Heart right ventricle (tissue), 16 donors: ENCODE measurements at regions of chr3 and their contacts with region 1.

Region 1: DNA sequence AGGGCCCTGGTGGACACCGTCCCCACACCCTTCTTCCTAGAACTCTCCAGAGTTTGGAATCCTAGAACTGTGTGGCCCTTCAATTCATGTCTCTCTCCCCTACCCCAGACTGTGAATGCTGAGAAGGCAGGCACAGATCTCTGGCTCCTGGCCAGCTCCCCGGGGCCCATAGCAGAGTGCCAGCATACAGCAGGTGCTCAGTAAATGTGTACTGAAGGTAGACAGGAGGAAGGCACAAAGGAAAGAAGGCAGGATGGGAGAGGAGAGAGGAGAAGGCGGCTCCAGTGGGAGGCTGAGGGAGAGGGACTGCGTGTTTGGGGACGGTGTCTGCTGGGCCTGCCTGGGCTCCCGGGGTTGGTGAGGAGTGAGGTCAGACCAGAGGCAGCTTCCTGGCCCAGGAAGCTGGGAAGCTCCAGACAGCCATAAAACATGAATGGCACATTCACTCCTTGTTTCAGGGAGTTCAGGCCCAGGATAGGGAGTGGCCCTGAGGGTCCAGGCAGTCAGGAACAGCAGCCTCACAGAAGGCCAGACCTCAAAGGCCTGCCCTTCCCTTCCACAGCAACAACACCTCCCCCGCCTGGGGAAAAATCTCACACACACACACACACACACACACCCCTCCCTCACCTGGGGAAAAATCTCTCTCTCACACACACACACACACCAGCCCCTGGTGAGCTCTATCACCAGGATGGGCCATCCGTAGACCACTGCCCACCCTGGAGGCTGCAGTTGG is 137.1 kb upstream of the PRR20G start:
- DNase-seq: no peak
- ATAC-seq: no peak
- H3K4me3 ChIP-seq: no peak overlapping the region
- H3K27ac ChIP-seq: no peak overlapping the region
- H3K4me1 ChIP-seq: no peaks in the 10 kb centered on the region
- H3K27me3 ChIP-seq: peaks cover 4 to 95% (median 78%) of the 10 kb centered on the region in 7 donors
- CTCF ChIP-seq: no peak

Region 2: GRCh38 chr3:127387119-127387518 is 37.8 kb before region 1 on chr3:
- intact Hi-C with region 1: loop called in 1 of 10 experiments (anchors 1 kb)
- DNase-seq: no peak
- ATAC-seq: no peak
- H3K4me3 ChIP-seq: no peak overlapping the region
- H3K27ac ChIP-seq: no peak overlapping the region
- H3K4me1 ChIP-seq: no peaks in the 10 kb centered on the region
- H3K27me3 ChIP-seq: peaks cover 0 to 63% (median 44%) of the 10 kb centered on the region in 7 donors
- CTCF ChIP-seq: no peak